Dorsolateral prefrontal cortex (tissue), 120 donors: ENCODE measurements at regions of chr1 and their contacts with region 1.

Region 1: DNA sequence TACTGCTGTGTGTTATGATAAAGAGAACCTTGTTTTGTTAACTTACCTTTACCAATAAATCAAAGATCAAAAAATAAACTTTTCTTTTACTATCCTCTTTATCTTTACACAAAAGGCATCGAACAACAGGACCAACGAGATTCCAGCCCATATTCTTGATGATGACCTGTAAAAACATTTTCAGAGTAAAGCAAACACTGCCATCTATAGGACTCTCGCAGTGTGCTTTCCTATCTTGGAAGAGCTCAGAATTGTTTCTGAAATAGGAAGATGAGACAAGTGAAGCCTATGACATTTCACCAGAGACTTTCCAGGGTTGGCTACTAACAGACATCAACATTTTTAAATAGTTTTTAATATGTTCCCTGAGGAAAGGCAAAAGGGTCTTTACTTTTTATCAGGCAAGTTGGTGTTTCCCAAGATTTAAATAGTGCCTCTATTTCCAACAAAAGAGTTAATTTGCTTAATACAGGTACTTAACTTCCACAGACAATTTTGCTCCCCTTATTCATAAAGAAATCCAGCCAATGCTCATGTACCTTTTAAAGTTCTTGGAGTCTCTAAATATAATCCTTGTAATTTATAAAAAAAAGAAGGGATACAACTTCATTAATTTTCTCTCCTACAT is 7.3 kb downstream of the GLMN start:
- DNase-seq: peak in 1 of 10 donors; percentile 16
- H3K4me3 ChIP-seq: no peak overlapping the region
- H3K27ac ChIP-seq: no peak overlapping the region
- H3K27me3 ChIP-seq: no peaks in the 10 kb centered on the region
- CTCF ChIP-seq: peak; percentile 29 to 84 (median 72)

Region 2: DNA sequence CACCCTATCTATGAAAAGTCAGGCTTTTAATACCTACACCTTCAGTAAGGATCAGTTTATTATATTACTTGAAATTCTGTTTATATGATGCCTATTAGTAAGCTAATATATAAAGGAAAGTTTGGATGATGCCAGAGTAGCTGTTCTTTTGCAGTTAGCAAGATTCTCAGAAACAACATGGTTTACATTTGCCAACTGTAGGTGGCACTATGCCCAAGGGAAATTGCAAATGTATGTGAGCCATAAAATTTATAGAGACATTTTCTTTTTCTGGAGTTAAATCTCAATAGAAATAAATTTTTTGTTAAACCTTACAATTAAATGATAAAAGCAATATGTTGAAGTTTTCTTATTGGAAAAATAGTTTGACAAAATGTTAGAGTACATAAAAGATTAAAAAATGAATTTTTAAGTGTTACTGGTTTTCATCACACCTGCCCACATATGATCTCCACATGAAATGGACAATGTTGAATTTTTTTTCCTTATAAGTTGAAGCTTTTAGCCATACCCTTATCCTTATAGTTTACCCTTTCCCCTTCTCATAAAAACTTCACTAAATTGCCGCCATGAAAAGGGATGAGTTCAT is 293.8 kb before region 1 on chr1:
- intact Hi-C with region 1: loop called (anchors 5 kb)
- DNase-seq: peak in 2 of 10 donors; percentile 30 to 49
- H3K4me3 ChIP-seq: no peak overlapping the region
- H3K27ac ChIP-seq: no peak overlapping the region
- H3K27me3 ChIP-seq: peaks cover 0 to 8% (median 0%) of the 10 kb centered on the region in 45 donors
- CTCF ChIP-seq: peak in 55 of 56 donors; percentile 33 to 79 (median 64)

Region 3: GRCh38 chr1:92230736-92231135 is 60.8 kb before region 1 on chr1:
- intact Hi-C with region 1: no loop called
- DNase-seq: peak in 1 of 10 donors; percentile 18
- H3K4me3 ChIP-seq: no peak overlapping the region
- H3K27ac ChIP-seq: no peak overlapping the region
- H3K27me3 ChIP-seq: no peaks in the 10 kb centered on the region
- CTCF ChIP-seq: no peak

Region 4: DNA sequence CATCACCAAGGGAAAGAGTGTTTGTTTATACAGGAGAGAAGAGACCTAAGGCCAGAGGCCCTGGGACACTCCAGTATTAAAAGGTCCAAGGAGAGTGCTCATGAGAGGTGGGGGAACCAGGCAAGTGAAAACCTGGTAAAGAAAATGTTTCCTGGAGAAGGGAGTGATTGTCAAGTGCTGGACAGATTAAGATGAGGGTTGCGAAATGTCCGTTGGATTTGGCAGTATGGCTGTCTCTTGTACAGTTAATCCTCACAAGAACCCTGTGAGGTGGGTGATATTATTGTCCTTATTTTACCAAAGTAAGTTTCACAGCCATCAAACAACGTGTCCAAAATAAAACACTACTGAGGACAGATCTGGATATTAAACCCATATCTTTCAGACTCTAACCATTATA is 51.6 kb after region 1 on chr1:
- intact Hi-C with region 1: no loop called
- DNase-seq: no peak
- H3K4me3 ChIP-seq: no peak overlapping the region
- H3K27ac ChIP-seq: no peak overlapping the region
- H3K27me3 ChIP-seq: no peaks in the 10 kb centered on the region
- CTCF ChIP-seq: no peak